ENCODE measurements at regions of chr6 and their contacts with region 1.

Region 1: DNA sequence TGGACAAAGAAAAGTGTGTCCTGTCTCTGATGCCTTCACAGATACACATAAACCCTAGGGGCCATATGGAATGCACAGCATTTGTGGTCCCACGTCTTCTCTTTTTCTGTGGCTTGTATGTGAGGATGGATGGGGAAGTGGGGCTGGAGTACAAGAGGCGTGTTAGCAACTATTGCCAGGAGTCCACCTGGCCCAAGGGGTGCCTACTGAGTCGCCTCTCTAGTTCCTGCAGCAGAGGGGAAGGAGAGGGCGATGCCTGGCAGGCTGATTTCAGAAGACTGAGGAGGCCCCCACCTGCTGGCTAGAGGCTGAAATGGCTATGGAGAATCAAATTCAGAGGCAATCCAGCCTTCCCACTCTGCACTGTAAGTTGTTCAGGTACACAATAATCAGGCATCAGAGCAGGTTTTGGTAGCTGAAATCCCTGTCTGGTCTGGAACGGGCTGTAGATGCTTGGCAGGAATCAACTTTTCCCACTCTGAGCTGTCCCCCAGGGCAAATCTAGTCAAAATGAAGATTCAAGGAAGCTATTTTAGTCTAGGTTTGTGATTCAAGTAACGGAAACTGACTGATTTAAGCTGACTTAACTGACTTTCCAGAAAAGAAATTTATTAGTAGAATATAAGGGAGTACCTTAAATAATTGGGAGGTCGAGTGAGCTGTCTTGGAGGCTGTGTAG is 14.9 kb upstream of the PPARD start:
- H3K4me3 ChIP-seq: no peak overlapping the region
- H3K27ac ChIP-seq: no peak overlapping the region
- H3K4me1 ChIP-seq: no peaks in the 10 kb centered on the region
- CTCF ChIP-seq: peak; percentile 46

Region 2: DNA sequence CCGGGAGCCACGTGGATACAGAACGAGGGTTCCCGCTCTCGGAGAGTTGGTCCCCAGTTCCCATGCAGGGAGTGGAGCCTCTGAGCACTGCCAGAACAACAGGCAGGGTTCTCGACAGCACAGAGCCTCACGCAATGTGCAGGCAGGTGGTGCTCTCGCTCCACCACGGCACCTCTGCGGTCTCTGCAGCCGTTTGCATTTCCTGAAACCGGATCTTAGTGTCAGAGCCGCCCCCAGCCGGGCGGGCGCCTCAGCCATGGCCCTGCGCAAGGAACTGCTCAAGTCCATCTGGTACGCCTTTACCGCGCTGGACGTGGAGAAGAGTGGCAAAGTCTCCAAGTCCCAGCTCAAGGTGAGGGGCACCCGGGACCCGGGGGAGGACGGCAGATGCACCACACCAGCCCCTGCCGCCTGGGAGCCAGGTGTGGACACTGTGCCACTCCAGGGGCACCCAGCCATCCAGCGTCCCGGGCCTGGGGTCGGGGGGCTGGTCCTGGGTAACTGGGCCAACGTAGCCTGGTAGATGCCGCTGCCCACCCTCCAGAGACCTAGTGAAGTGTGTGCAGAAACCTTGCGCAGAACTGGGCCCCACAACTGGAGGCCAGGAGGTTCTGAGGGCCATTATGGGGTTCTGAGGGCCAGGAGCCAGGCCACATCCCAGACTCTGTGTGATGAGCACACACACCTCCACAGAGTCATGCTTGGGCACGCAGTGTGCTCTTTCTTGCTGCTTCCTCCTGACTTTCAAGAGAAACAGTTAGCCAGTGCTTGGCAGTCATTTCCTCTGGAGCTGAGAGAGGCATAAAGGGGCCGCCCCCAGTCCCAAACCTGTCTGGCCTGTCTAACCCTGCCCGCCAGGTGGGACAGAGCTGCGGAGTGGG is 29.6 kb before region 1 on chr6 and contains the start of gene DEF6:
- CTCF ChIA-PET with region 1: interaction called, 28 read pairs
- POLR2A ChIA-PET with region 1: interaction called, 3 read pairs
- H3K4me3 ChIP-seq: no peak within 1 kb of the TSS
- H3K27ac ChIP-seq: no peak within 1 kb of the TSS
- H3K4me1 ChIP-seq: no peaks in the 10 kb centered on the region
- CTCF ChIP-seq: 0 out of 2 replicates have a peak, but pooled peaks have one; percentile 45

Region 3: GRCh38 chr6:35305117-35305516 is 22.4 kb before region 1 on chr6:
- CTCF ChIA-PET with region 1: interaction called, 23 read pairs
- POLR2A ChIA-PET with region 1: interaction called, 6 read pairs
- H3K4me3 ChIP-seq: no peak overlapping the region
- H3K27ac ChIP-seq: no peak overlapping the region
- H3K4me1 ChIP-seq: no peaks in the 10 kb centered on the region
- CTCF ChIP-seq: 0 out of 2 replicates have a peak, but pooled peaks have one; percentile 19

Region 4: GRCh38 chr6:35342258-35343091 is 15.0 kb after region 1 on chr6 and contains the start of gene PPARD:
- CTCF ChIA-PET with region 1: interaction called, 14 read pairs
- POLR2A ChIA-PET with region 1: no interaction called
- H3K4me3 ChIP-seq: peak within 1 kb of the TSS; percentile 65
- H3K27ac ChIP-seq: no peak within 1 kb of the TSS; the same call in 1 of the 2 replicates
- H3K4me1 ChIP-seq: no peaks in the 10 kb centered on the region; the same call in 1 of the 2 replicates
- CTCF ChIP-seq: peak; percentile 97